AG04449 (cell line): ENCODE measurements at regions of chr5 and their contacts with region 1.

Region 1: DNA sequence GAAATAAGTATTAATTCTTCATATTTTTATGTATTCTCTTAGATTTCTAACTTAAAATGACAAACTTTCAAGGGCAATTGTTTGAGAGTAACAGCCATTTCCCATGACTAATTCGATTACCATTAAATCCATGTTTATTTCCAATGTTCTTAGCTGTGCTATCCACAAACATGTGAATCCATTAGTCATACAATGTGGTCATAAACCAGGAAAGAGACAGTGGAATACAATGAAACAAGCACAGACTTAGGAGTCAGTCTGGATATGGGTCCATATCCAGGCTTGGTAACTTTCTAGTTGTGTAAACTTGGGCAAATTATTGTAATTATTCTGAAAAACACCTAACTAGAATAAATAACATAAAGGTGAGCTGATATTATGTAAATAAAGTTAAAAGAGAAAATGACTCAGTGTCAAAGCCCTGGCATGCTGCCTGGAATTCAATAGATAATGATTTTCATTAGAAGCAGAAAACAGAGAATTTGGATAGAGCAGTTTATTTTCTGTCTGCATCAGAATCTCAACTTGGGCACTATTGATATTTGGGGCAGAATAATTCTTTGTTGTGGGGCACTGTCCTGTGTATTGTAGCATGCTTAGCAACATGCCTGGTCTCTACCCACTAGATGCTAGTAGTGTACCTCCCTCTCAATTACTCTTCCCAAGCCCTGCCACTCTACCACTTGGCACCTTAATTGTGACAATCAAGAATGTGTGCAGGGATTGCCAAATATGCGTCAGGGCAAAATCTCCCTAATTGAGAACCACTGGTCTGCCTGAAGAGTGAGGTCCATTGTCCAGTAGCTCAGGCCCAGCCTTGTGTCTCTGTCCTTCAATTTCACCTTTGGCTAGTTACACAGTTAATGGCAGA is 44.7 kb upstream of the SLC27A6 start:
- DNase-seq: no peak
- H3K4me3 ChIP-seq: no peak overlapping the region
- CTCF ChIP-seq: no peak

Region 2: GRCh38 chr5:128905571-128906110 is 14.9 kb before region 1 on chr5:
- CTCF ChIA-PET with region 1: interaction called, 10 read pairs
- POLR2A ChIA-PET with region 1: no interaction called
- DNase-seq: peak; percentile 4
- H3K4me3 ChIP-seq: no peak overlapping the region
- CTCF ChIP-seq: peak; percentile 68